ENCODE measurements at regions of chr18 and their contacts with region 1.

Region 1: DNA sequence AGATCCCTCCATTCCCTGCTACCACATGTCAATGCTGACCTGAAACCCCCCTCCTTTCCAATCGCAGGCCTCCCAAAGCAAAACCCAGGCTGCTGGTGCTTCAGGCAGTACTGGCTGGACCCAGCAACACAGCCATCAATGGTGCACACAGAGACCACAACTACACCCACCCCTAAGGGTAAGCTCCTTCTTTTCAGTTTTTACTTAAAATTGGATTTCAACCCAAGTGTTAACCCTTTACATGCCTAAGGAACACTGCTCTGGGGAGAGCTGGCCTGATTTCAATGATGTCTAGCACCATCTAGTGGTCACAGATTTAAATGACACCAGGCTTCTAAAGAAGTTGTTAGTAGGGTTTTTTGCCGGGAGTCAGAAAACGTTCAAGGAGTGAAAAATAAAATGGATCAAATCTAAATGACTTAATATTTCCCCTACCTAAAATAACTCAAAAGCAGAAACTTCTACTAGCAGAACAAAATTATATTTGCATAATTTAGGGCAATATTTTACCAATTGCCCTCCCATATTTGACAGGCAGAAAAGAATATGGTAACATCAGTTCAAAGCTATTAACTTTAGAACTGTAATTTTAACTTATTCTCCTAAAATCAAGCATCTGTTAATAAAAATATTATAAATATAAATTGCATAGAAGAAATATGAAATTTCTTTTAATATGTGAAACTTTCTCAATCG is 24.6 kb downstream of the FECH start:
- DNase-seq: no peak
- H3K4me3 ChIP-seq: no peak overlapping the region
- CTCF ChIP-seq: peak; percentile 37

Region 2: GRCh38 chr18:56740645-56741044 is 821.2 kb before region 1 on chr18:
- CTCF ChIA-PET with region 1: interaction called, 10 read pairs
- POLR2A ChIA-PET with region 1: no interaction called
- DNase-seq: no peak
- H3K4me3 ChIP-seq: no peak overlapping the region
- CTCF ChIP-seq: no peak

Region 3: GRCh38 chr18:56789004-56789888 is 772.6 kb before region 1 on chr18:
- CTCF ChIA-PET with region 1: interaction called, 17 read pairs
- POLR2A ChIA-PET with region 1: no interaction called
- DNase-seq: no peak
- H3K4me3 ChIP-seq: no peak overlapping the region
- CTCF ChIP-seq: peak; percentile 51

Region 4: DNA sequence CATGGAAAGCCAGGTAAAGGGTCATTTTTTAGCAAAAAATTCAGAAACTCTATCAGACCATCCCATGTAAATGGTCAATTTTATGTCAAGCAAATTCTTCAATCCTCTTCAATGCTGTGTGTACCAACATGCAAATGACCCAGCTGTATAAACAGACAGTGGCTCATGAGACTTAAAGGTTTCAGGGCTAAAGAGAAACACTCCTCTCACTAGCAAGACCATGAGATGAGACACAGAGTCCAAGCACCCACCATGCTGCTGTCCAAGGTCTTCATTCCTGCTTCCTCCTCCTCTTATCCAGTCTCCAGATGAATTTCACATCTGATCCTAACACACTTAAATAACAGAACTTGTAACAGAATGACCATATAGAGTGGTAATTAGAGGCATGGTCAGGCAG is 157.5 kb before region 1 on chr18:
- CTCF ChIA-PET with region 1: no interaction called
- POLR2A ChIA-PET with region 1: no interaction called
- DNase-seq: no peak
- H3K4me3 ChIP-seq: no peak overlapping the region
- CTCF ChIP-seq: no peak

Region 5: DNA sequence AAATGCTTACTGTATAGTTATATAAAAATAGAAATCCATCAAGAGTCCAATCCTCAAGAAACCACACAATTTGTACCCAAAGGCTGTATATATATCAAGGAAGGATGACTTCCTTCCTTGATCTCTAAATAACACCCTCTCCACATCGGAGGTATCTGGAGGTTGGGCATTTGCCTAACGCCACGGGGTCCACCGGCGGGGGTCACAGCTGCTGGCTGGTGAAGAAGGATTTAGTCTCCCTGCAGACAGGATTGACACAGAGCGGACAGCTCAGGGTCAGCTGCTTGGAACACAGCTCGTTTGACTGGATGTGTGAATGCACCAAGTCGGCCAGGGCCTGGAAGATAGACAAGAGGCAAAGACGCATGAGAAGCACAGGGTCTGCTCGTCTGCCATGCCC is 11.4 kb before region 1 on chr18:
- CTCF ChIA-PET with region 1: interaction called, 24 read pairs
- POLR2A ChIA-PET with region 1: no interaction called
- DNase-seq: no peak
- H3K4me3 ChIP-seq: no peak overlapping the region
- CTCF ChIP-seq: no peak

Region 6: GRCh38 chr18:57581302-57581934 is 19.5 kb after region 1 on chr18:
- CTCF ChIA-PET with region 1: interaction called, 16 read pairs
- POLR2A ChIA-PET with region 1: no interaction called
- DNase-seq: no peak
- H3K4me3 ChIP-seq: no peak overlapping the region
- CTCF ChIP-seq: no peak

Measured in AG04449 (cell line).